Activated T-helper 2 cell treated with anti-CD3 and anti-CD28 coated beads, Interferon-gamma antibody, Interleukin-2, Interleukin-4, amounts not matched to agents 10 μg/mL and 5 μg/mL and 100 μg/mL, durations not matched to agents 14 hours and 24 hours and 36 hours (primary cell): ENCODE measurements at regions of chr15 and their contacts with region 1.

Region 1: GRCh38 chr15:44698641-44699040 is 12.5 kb downstream of the PATL2 start:
- DNase-seq: no peak
- H3K4me3 Mint-ChIP-seq: no peak overlapping the region
- H3K27ac Mint-ChIP-seq: no peak overlapping the region
- H3K4me1 Mint-ChIP-seq: peaks cover 16% of the 10 kb centered on the region
- H3K27me3 Mint-ChIP-seq: peaks cover 10% of the 10 kb centered on the region

Region 2: GRCh38 chr15:44414001-44414400 is 284.6 kb before region 1 on chr15:
- intact Hi-C with region 1: no loop called
- DNase-seq: no peak
- H3K4me3 Mint-ChIP-seq: no peak overlapping the region
- H3K27ac Mint-ChIP-seq: no peak overlapping the region
- H3K4me1 Mint-ChIP-seq: peaks cover 7% of the 10 kb centered on the region
- H3K27me3 Mint-ChIP-seq: no peaks in the 10 kb centered on the region

Region 3: DNA sequence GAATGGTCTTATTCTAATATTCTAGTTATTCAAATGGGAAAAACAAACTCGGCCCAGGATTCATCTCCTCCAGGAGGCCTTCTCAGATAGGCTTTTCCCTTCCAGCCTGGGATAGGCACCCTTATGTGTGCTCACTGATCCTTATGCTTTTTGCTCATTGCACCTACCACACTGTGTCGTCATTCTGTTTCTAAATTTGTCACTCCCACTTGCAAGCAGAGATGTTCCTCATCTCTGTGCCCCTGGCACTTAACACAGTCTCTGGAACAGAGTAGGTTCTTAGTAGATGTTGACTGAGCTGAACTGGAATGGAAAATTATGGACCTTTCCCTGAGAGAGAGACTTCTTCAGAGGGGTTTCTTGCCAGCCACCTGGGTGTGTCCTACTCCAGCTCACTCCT is 16.4 kb before region 1 on chr15:
- intact Hi-C with region 1: loop called (anchors 2 kb)
- DNase-seq: no peak
- H3K4me3 Mint-ChIP-seq: peak overlapping the region; percentile 60
- H3K27ac Mint-ChIP-seq: peak overlapping the region; percentile 87
- H3K4me1 Mint-ChIP-seq: peaks cover 67% of the 10 kb centered on the region
- H3K27me3 Mint-ChIP-seq: no peaks in the 10 kb centered on the region